Sigmoid colon (tissue), 7 donors: ENCODE measurements at regions of chr19 and their contacts with region 1.

Region 1: GRCh38 chr19:50476224-50476942 is at the starts of genes EMC10 and GARIN5A:
- DNase-seq: peak; percentile 95
- H3K4me3 ChIP-seq: peak within 1 kb of the TSS; percentile 75 to 95 (median 88)
- H3K27ac ChIP-seq: peak within 1 kb of the TSS; percentile 76 to 81 (median 80)
- H3K4me1 ChIP-seq: peaks cover 0 to 26% (median 15%) of the 10 kb centered on the region in 4 donors
- H3K27me3 ChIP-seq: no peaks in the 10 kb centered on the region
- CTCF ChIP-seq: no peak
- EP300 ChIP-seq: peak in 1 of 4 donors; percentile 70
- POLR2A ChIP-seq: peak in 1 of 2 donors; percentile 38
- total RNA-seq, gene EMC10: 38.5 to 48.5 (median 42.3) TPM
- total RNA-seq, gene GARIN5A: 0.36 to 7.1 (median 1.2) TPM in 3 of 4 donors, not detected in the other

Region 2: GRCh38 chr19:50376166-50377050 is 100.0 kb before region 1 on chr19 and contains the start of gene NR1H2:
- intact Hi-C with region 1: loop called (anchors 2 kb)
- DNase-seq: peak; percentile 98
- H3K4me3 ChIP-seq: peak within 1 kb of the TSS; percentile 65 to 99 (median 93)
- H3K27ac ChIP-seq: peak within 1 kb of the TSS; percentile 92 to 100 (median 99)
- H3K4me1 ChIP-seq: peaks cover 0 to 17% (median 9%) of the 10 kb centered on the region in 4 donors
- H3K27me3 ChIP-seq: no peaks in the 10 kb centered on the region
- CTCF ChIP-seq: no peak
- EP300 ChIP-seq: peak in 1 of 4 donors; percentile 70
- POLR2A ChIP-seq: peak; percentile 82 to 85
- total RNA-seq, gene NR1H2: 92.5 to 143 (median 109) TPM

Region 3: DNA sequence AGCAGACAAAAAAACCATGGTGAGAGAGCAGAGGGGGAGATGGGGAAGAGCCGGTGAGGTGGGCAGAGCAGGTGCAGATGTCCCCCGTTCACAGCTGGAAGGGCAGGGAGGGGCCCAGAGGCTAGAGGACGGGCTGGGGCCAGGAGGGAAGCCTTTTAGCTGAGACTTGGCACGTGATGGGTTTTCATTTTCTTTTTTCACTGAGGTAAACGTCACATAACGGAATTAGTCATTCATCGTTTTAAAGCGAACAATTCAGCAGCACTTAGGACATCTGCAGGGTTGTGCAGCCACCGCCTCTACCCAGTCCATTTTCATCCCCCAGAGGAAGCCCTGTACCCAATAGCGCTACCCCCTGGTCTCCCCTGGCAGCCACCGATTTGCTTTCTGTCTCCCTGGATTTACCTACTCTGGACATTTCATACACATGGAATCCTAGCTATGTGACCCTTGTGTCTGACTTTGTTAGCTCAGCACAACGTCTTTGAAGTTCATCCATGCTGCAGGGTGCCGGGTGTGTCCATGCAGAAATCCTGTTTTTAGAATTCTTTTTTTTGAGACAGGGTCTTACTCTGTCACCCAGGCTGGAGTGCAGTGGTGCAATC is 16.1 kb before region 1 on chr19:
- intact Hi-C with region 1: no loop called
- DNase-seq: no peak
- H3K4me3 ChIP-seq: no peak overlapping the region
- H3K27ac ChIP-seq: no peak overlapping the region
- H3K4me1 ChIP-seq: no peaks in the 10 kb centered on the region
- H3K27me3 ChIP-seq: peaks cover 4 to 50% (median 26%) of the 10 kb centered on the region in 3 donors
- CTCF ChIP-seq: no peak
- EP300 ChIP-seq: no peak
- POLR2A ChIP-seq: no peak

Region 4: DNA sequence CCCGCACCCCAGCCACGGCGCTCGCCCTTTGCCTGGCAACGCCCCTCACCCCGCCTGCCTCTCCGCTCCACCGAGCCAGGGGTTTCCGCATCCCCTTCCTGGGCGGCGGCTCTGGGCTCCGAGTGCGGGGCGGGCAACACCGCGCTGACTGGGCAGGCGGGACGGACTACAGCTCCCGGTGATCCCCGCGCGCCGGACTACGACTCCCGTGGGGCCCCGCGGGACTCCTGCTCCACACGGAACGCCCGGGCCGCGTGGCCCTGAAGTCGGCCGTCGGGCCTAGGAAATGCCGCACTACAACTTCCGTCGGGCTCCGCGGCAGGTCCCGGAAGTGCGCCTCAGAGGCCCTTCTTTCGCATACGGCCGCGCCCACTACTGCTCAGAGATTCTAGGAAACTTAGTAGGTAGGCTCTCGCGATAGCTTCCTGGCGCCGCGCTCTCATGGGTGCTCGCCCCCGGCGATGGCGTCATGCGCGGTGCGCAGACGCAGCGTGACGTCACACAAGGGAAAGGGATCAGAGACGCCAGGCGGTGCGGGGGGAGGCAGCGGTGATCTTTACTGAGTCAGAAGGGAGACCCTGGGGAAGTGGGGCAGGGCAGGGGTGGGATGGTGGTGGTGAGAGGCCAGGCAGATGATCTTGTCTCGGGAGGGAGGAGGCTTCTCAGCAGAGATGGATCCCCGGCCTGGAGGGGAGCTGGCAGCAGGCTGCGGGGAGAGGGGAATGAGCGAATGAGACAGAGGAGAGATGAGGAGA is 34.9 kb after region 1 on chr19 and contains the start of gene JOSD2:
- intact Hi-C with region 1: loop called (anchors 1 kb)
- DNase-seq: peak; percentile 99
- H3K4me3 ChIP-seq: peak within 1 kb of the TSS; percentile 56 to 94 (median 80)
- H3K27ac ChIP-seq: peak within 1 kb of the TSS; percentile 76 to 80 (median 78)
- H3K4me1 ChIP-seq: peaks cover 0 to 15% (median 9%) of the 10 kb centered on the region in 4 donors
- H3K27me3 ChIP-seq: peaks cover 0 to 10% (median 0%) of the 10 kb centered on the region in 3 donors
- CTCF ChIP-seq: no peak
- EP300 ChIP-seq: peak in 1 of 4 donors; percentile 50
- POLR2A ChIP-seq: peak in 1 of 2 donors; percentile 62
- total RNA-seq, gene JOSD2: 23.5 to 47.9 (median 33.7) TPM